Heart left ventricle (tissue), 16 donors: ENCODE measurements at regions of chr14 and their contacts with region 1.

Region 1: DNA sequence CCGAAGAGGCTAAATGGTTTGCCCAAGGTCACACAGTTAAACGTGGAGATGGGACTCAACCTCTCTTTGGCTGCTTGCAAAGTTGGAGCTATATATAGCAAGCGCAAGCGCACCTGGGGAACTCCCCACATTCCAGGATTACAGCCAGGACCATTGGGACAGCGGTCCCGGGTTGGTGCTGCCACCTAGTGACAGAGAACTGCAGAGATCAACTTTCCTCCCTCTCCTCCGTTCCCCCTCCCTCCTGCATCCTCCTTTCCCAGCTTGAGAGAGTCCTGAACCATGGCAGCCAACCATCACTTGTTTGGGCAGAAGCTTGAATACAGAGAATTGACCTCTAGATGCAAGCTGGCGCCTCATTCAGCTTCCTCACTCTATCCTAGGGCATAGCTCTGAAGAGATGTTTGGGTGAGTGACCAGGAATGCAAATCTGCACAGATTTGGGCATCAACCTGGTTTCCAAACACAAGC is 17.4 kb upstream of the FLVCR2 start:
- DNase-seq: peak in 4 of 5 donors; percentile 61 to 73 (median 67)
- ATAC-seq: peak; percentile 63 to 88 (median 87)
- H3K4me3 ChIP-seq: no peak overlapping the region
- H3K27ac ChIP-seq: no peak overlapping the region
- H3K4me1 ChIP-seq: peaks cover 0 to 17% (median 0%) of the 10 kb centered on the region in 12 donors
- H3K27me3 ChIP-seq: no peaks in the 10 kb centered on the region
- CTCF ChIP-seq: peak; percentile 57 to 80 (median 70)
- POLR2A ChIP-seq: no peak

Region 2: DNA sequence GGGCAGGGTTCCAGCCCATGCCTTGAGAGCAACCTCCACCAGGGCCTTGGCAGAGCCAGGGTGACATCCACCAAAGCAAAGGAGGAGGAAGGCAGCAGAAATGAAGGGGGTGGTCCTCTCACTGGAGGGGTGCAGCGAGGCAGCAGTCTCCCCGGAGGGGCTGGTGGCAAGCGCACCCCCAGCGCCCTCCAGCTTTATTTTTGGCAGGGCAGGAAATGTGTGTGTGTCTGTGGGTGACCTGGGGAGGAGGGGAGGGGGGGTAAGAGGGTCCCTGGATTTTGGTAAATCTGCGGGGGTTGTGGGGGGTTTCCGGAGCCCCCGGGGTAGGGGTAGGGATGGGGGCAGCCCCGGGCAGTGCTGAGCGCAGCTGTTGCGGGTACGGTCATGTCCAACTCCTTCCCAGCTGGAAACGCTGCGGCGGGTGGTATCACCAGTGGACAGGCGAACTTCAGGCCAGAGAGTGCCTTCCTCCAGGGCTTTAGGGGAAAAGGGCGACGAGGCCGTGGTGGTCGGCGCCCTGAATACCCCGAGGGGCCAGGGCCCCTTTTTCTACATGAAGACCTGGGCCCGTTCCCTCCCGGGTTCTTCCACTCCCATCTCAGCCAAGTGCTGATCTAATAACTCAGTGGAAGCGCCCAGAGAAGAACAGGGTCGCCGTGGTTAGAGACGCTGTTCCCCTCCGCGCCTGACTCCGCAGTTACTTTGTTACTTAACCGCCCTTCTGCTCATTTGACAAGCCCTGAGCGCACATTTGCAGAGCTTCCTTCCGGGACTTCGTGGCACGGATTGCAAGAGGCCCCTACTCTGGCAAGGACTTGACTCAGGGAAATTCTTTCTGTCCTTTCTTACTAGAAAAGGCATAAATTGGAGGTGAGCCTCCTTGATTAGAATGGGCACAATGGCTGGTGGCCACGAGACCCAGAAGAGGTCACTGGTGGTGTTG is 227.1 kb before region 1 on chr14:
- intact Hi-C with region 1: no loop called
- DNase-seq: peak; percentile 37 to 75 (median 70)
- ATAC-seq: peak; percentile 60 to 78 (median 70)
- H3K4me3 ChIP-seq: peak overlapping the region in 4 of 12 donors; percentile 14 to 49 (median 22)
- H3K27ac ChIP-seq: peak overlapping the region in 10 of 12 donors; percentile 17 to 96 (median 46)
- H3K4me1 ChIP-seq: peaks cover 0 to 46% (median 3%) of the 10 kb centered on the region in 12 donors
- H3K27me3 ChIP-seq: no peaks in the 10 kb centered on the region
- CTCF ChIP-seq: no peak
- POLR2A ChIP-seq: no peak

Region 3: GRCh38 chr14:75452900-75453747 is 107.9 kb before region 1 on chr14:
- intact Hi-C with region 1: no loop called
- DNase-seq: peak in 4 of 5 donors; percentile 54 to 76 (median 65)
- ATAC-seq: peak; percentile 39 to 66 (median 58)
- H3K4me3 ChIP-seq: no peak overlapping the region
- H3K27ac ChIP-seq: peak overlapping the region; percentile 46 to 87 (median 74)
- H3K4me1 ChIP-seq: peaks cover 3 to 94% (median 69%) of the 10 kb centered on the region in 12 donors
- H3K27me3 ChIP-seq: no peaks in the 10 kb centered on the region
- CTCF ChIP-seq: no peak
- POLR2A ChIP-seq: no peak

Region 4: DNA sequence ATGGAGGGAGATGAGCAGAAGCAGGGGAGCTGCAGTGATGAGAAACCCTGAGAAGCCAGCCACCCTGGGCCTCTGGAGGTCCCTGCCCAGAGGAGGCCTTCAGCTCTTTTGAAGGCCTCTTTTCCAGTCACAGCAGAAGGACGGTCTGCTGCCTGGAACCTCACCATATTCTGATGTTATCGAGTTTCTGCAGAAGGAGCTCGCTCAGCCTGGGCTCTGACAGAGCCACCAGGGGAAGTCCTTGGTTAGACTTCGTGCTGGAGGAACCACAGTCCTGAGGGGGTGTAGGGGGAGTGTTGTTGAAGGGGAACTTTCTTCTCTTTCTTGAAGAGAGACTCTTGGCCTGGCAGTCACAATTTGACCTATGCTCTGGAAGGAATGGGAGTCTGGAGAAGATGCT is 63.8 kb before region 1 on chr14:
- intact Hi-C with region 1: loop called in 1 of 10 experiments (anchors 5 kb)
- DNase-seq: no peak
- ATAC-seq: no peak
- H3K4me3 ChIP-seq: no peak overlapping the region
- H3K27ac ChIP-seq: no peak overlapping the region
- H3K4me1 ChIP-seq: peaks cover 0 to 12% (median 0%) of the 10 kb centered on the region in 12 donors
- H3K27me3 ChIP-seq: no peaks in the 10 kb centered on the region
- CTCF ChIP-seq: no peak
- POLR2A ChIP-seq: no peak

Region 5: GRCh38 chr14:75542588-75543091 is 18.4 kb before region 1 on chr14:
- intact Hi-C with region 1: no loop called
- DNase-seq: peak; percentile 57 to 81 (median 67)
- ATAC-seq: peak; percentile 76 to 96 (median 88)
- H3K4me3 ChIP-seq: peak overlapping the region in 1 of 12 donors; percentile 33
- H3K27ac ChIP-seq: peak overlapping the region in 5 of 12 donors; percentile 2 to 91 (median 21)
- H3K4me1 ChIP-seq: peaks cover 0 to 40% (median 0%) of the 10 kb centered on the region in 12 donors
- H3K27me3 ChIP-seq: no peaks in the 10 kb centered on the region
- CTCF ChIP-seq: no peak
- POLR2A ChIP-seq: no peak